AG04449 (cell line): ENCODE measurements at regions of chr6 and their contacts with region 1.

Region 1: GRCh38 chr6:133923938-133924593 is 29.0 kb upstream of the TBPL1 start:
- DNase-seq: peak; percentile 33
- H3K4me3 ChIP-seq: no peak overlapping the region
- CTCF ChIP-seq: peak; percentile 68

Region 2: GRCh38 chr6:132465530-132466485 is 1458.3 kb before region 1 on chr6:
- CTCF ChIA-PET with region 1: no interaction called
- POLR2A ChIA-PET with region 1: no interaction called
- DNase-seq: no peak
- H3K4me3 ChIP-seq: no peak overlapping the region
- CTCF ChIP-seq: no peak

Region 3: DNA sequence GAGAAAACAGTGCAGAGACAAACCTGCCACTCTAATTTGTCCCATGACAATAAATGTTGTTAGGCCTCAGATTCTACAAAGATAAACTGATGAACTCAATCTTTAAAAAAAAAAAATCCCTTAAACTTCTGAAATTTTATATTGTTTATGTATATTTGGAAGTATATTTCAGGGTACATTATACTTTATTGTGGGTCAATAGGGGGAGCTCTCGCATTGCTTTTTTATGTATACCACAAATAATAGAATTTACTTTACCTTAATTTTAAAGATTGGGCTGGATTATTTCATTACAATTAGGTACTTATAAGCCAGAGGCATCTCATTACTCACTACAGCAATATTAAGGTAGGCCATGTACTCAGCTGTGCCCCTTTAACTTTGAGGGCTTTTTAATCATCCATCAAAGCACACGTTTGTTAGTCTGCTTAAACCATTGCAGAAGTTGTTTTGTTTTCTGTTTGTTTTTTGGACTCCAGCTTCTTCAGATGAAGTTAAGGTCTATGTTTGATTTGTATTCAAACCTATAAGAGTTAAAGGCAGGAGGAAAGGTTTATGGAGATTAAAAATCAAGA is 739.2 kb before region 1 on chr6:
- CTCF ChIA-PET with region 1: interaction called, 17 read pairs
- POLR2A ChIA-PET with region 1: no interaction called
- DNase-seq: peak; percentile 3
- H3K4me3 ChIP-seq: no peak overlapping the region
- CTCF ChIP-seq: peak; percentile 22

Region 4: DNA sequence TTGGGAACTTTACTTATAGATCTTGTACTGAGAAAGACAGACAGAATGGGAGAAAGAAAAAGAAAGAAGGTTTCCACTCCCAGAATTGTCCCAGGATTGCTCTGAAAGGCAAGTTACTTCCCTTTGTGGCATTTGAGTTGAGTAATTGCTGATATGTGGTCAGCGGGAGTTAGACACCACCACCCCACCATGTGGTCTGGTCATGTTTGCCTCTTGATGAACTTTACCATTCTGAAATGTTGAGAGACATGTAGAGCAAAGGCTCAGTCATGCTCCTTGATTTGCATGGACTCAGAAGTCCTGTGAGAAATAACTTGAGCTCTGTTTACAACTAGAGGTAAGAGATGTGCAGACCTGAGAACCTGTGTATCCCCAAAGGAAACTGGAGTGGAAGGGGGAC is 18.0 kb before region 1 on chr6:
- CTCF ChIA-PET with region 1: interaction called, 10 read pairs
- POLR2A ChIA-PET with region 1: no interaction called
- DNase-seq: no peak
- H3K4me3 ChIP-seq: no peak overlapping the region
- CTCF ChIP-seq: no peak

Region 5: DNA sequence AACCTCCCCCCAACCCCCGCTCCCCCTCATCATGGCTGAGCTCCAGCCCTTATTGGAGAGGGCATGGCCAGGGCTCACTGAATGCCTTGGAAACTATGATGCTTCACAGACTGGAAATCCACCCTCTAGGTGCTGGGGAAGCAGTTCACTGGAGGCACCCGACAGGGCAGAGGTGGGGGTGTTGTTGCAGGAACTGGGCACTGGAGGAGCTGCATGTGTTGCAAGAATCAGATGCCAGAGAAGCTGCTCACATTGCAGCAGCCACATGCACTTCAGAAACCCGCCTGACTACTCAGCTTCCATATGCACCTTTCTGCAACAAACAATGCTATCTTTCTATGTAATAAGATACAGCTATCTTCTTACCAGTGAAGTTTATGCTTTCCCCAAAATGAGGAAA is 21.1 kb after region 1 on chr6:
- CTCF ChIA-PET with region 1: interaction called, 71 read pairs
- POLR2A ChIA-PET with region 1: no interaction called
- DNase-seq: no peak
- H3K4me3 ChIP-seq: no peak overlapping the region
- CTCF ChIP-seq: no peak

Region 6: GRCh38 chr6:133966654-133967329 is 42.7 kb after region 1 on chr6:
- CTCF ChIA-PET with region 1: interaction called, 17 read pairs
- POLR2A ChIA-PET with region 1: no interaction called
- DNase-seq: no peak
- H3K4me3 ChIP-seq: no peak overlapping the region
- CTCF ChIP-seq: no peak

Region 7: GRCh38 chr6:133991096-133991593 is 67.1 kb after region 1 on chr6:
- CTCF ChIA-PET with region 1: interaction called, 14 read pairs
- POLR2A ChIA-PET with region 1: no interaction called
- DNase-seq: peak; percentile 92
- H3K4me3 ChIP-seq: no peak overlapping the region
- CTCF ChIP-seq: no peak